Gastrocnemius medialis (tissue), 4 donors: ENCODE measurements at regions of chr2 and their contacts with region 1.

Region 1: DNA sequence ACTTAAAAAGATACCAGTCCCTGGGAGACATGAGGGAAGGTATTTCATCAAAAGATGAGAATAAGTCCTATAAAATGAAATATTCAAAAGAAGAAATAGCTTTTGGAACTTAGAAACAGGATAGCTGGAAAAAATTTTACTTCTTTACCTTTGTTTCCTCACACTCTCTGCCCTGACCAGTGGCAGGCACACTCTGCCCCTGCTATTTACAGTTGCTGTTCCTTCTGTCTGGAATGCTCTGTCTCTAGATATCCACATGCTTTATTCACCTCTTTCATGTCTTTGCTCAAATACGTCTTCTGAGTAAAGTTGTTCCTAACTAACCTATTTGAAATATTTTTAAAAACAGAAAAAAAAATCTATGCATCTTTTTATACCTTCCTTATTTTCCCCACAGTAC is 125.6 kb downstream of the PTRHD1 start:
- DNase-seq: no peak
- ATAC-seq: no peak
- H3K4me3 ChIP-seq: no peak overlapping the region
- H3K27ac ChIP-seq: peak overlapping the region in 1 of 4 donors; percentile 8
- H3K4me1 ChIP-seq: peaks cover 13 to 52% of the 10 kb centered on the region in 2 donors
- H3K27me3 ChIP-seq: no peaks in the 10 kb centered on the region
- CTCF ChIP-seq: no peak
- POLR2A ChIP-seq: no peak

Region 2: GRCh38 chr2:24626131-24626530 is 41.4 kb before region 1 on chr2:
- in situ Hi-C with region 1: no loop called
- intact Hi-C with region 1: no loop called
- DNase-seq: no peak
- ATAC-seq: peak in 1 of 2 donors; percentile 46
- H3K4me3 ChIP-seq: no peak overlapping the region
- H3K27ac ChIP-seq: no peak overlapping the region
- H3K4me1 ChIP-seq: peaks cover 38 to 40% of the 10 kb centered on the region in 2 donors
- H3K27me3 ChIP-seq: no peaks in the 10 kb centered on the region
- CTCF ChIP-seq: no peak
- POLR2A ChIP-seq: no peak

Region 3: GRCh38 chr2:24708537-24709152 is 41.1 kb after region 1 on chr2:
- in situ Hi-C with region 1: no loop called
- intact Hi-C with region 1: loop called (anchors 5 kb)
- DNase-seq: no peak
- ATAC-seq: no peak
- H3K4me3 ChIP-seq: no peak overlapping the region
- H3K27ac ChIP-seq: no peak overlapping the region
- H3K4me1 ChIP-seq: peaks cover 1 to 14% of the 10 kb centered on the region in 2 donors
- H3K27me3 ChIP-seq: no peaks in the 10 kb centered on the region
- CTCF ChIP-seq: no peak
- POLR2A ChIP-seq: no peak